Activated CD4-positive, alpha-beta memory T cell treated with anti-CD3 and anti-CD28 coated beads for 36 hours (primary cell): ENCODE measurements at regions of chr12 and their contacts with region 1.

Region 1: GRCh38 chr12:96578526-96579125 is 89.2 kb downstream of the CFAP54 start:
- DNase-seq: no peak
- H3K4me3 Mint-ChIP-seq: no peak overlapping the region
- H3K27ac Mint-ChIP-seq: no peak overlapping the region
- H3K4me1 Mint-ChIP-seq: no peaks in the 10 kb centered on the region
- H3K27me3 Mint-ChIP-seq: no peaks in the 10 kb centered on the region

Region 2: DNA sequence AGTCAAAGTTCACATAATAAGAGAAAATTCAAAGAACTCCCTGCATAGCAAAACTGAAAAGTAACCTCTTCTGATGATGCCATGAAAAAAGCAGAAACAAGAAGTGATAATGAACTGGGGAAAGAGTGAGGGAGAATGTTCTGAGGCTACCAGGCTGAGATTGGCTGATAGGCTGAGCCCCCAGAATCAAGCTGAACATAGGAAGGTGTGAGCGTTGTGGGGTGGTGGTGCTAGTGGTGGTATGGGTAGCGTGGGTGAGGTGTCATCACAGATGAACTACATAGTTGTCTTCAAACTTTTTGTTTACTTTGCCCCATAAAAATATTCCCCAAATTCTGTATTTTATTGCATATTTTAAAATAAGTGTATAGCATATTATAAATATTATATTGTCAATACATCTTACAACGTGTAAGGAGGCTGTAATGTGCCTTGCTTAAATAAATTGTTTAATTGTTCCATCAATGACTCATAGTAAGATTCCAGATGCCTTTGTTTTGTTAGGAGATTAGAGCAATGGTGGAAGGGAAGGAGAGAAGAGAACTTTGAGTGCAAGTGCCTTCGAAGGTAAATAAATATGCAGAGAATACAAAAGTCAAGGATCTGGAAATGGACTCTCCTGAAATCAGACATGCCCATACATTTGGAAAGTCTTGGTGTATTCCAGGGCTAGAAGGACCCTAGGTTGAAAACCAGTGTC is 105.1 kb before region 1 on chr12:
- CTCF ChIA-PET with region 1: no interaction called
- POLR2A ChIA-PET with region 1: no interaction called
- intact Hi-C with region 1: no loop called
- DNase-seq: no peak
- H3K4me3 Mint-ChIP-seq: no peak overlapping the region
- H3K27ac Mint-ChIP-seq: no peak overlapping the region
- H3K4me1 Mint-ChIP-seq: no peaks in the 10 kb centered on the region
- H3K27me3 Mint-ChIP-seq: no peaks in the 10 kb centered on the region

Region 3: GRCh38 chr12:96719660-96720363 is 141.2 kb after region 1 on chr12:
- CTCF ChIA-PET with region 1: interaction called, 3 read pairs
- POLR2A ChIA-PET with region 1: no interaction called
- intact Hi-C with region 1: loop called (anchors 5 kb)
- DNase-seq: peak; percentile 24
- H3K4me3 Mint-ChIP-seq: peak overlapping the region; percentile 81
- H3K27ac Mint-ChIP-seq: peak overlapping the region; percentile 88
- H3K4me1 Mint-ChIP-seq: peaks cover 11% of the 10 kb centered on the region
- H3K27me3 Mint-ChIP-seq: no peaks in the 10 kb centered on the region

Region 4: GRCh38 chr12:96906849-96907670 is 328.4 kb after region 1 on chr12 and contains the start of gene NEDD1:
- CTCF ChIA-PET with region 1: no interaction called
- POLR2A ChIA-PET with region 1: no interaction called
- intact Hi-C with region 1: no loop called
- DNase-seq: peak; percentile 87
- H3K4me3 Mint-ChIP-seq: peak within 1 kb of the TSS; percentile 93
- H3K27ac Mint-ChIP-seq: peak within 1 kb of the TSS; percentile 96
- H3K4me1 Mint-ChIP-seq: peaks cover 39% of the 10 kb centered on the region
- H3K27me3 Mint-ChIP-seq: no peaks in the 10 kb centered on the region
- total RNA-seq, gene NEDD1: 55.4 to 57.9 TPM

Region 5: GRCh38 chr12:96985480-96986362 is 407.1 kb after region 1 on chr12:
- CTCF ChIA-PET with region 1: interaction called, 26 read pairs
- POLR2A ChIA-PET with region 1: no interaction called
- intact Hi-C with region 1: loop called (anchors 1 kb)
- DNase-seq: peak; percentile 47
- H3K4me3 Mint-ChIP-seq: peak overlapping the region; percentile 52
- H3K27ac Mint-ChIP-seq: no peak overlapping the region
- H3K4me1 Mint-ChIP-seq: peaks cover 6% of the 10 kb centered on the region
- H3K27me3 Mint-ChIP-seq: peaks cover 11% of the 10 kb centered on the region

Region 6: DNA sequence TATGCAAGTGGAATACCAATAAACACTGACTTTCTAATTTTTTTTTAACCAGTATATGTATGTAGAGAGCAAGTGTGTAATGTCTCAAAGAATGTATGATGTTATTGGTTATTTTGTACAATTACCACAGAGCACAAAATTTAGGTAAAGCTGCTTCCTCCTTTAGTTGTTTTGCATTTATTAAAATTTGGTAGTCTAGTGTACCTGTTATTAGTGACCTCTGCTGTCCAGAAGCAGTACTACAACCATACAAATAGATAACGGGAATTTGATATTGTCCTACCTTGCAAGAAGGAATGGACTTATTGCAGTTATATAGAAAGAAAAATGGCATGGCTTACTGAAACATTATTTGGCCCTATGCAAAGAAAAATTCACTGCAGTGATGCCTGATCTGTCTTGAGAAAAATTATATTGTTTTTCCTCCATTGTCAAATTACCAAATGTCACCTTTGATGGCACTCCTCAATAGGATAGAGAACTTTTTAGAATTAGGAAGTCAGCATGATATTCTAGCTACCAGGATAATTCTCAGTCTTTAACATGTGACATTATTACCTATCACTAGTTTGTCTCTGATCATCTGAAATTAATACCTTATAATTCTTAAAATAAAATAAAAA is 730.1 kb after region 1 on chr12:
- CTCF ChIA-PET with region 1: interaction called, 72 read pairs
- POLR2A ChIA-PET with region 1: no interaction called
- intact Hi-C with region 1: loop called (anchors 1 kb)
- DNase-seq: no peak
- H3K4me3 Mint-ChIP-seq: no peak overlapping the region
- H3K27ac Mint-ChIP-seq: no peak overlapping the region
- H3K4me1 Mint-ChIP-seq: no peaks in the 10 kb centered on the region
- H3K27me3 Mint-ChIP-seq: peaks cover 7% of the 10 kb centered on the region

Region 7: DNA sequence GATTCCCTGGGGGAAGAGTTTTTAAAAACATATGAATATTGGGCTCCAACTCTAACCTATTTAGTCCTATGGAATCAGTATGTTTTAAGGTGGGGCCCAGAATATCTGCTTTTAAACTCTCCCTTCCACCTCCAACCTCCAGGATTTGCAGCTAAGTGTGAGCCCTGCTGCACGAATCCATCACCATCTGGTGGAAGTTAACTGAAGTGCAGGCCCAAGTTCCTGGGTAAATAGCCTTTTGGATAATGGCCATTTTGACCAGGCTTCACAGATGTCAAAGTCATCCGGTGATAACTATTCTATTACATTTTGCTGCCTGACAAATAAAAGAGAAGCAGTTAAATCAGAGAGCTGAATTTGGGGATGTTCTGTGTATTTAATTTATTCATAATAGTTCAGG is 825.9 kb after region 1 on chr12:
- CTCF ChIA-PET with region 1: interaction called, 3 read pairs
- POLR2A ChIA-PET with region 1: no interaction called
- intact Hi-C with region 1: loop called (anchors 10 kb)
- DNase-seq: peak; percentile 11
- H3K4me3 Mint-ChIP-seq: no peak overlapping the region
- H3K27ac Mint-ChIP-seq: no peak overlapping the region
- H3K4me1 Mint-ChIP-seq: no peaks in the 10 kb centered on the region
- H3K27me3 Mint-ChIP-seq: no peaks in the 10 kb centered on the region